Activated CD4-positive, alpha-beta T cell treated with anti-CD3 and anti-CD28 coated beads for 36 hours (primary cell): ENCODE measurements at regions of chr10 and their contacts with region 1.

Region 1: DNA sequence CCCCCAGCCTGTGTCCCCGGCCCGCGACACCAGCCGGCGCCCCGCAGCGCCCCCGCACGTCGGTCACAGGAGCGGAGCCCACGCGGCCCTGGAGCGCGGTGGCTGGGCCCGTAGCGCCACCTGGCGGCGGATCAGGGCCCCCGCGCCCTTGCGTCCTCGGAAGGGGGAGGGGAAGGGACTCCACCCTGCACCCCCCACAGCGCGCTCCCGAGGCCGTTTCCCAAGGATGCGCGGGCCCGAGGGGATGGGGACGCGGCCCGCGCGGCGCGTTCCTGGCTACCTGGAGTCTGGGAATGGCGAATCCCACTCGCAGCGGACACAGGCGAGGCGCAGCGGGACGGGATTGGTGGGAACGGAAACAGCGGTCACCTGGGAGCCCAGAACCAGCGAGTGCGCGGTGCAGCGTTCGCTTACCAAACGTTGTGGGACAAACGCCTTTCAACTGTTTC is 23.8 kb upstream of the MKI67 start:
- DNase-seq: peak; percentile 89
- ATAC-seq: peak; percentile 96
- H3K4me3 Mint-ChIP-seq: peak overlapping the region; percentile 60
- H3K27ac Mint-ChIP-seq: no peak overlapping the region
- H3K4me1 Mint-ChIP-seq: peaks cover 21% of the 10 kb centered on the region
- H3K27me3 Mint-ChIP-seq: no peaks in the 10 kb centered on the region

Region 2: GRCh38 chr10:127906548-127907377 is 243.3 kb before region 1 on chr10 and contains the start of gene PTPRE:
- CTCF ChIA-PET with region 1: no interaction called
- POLR2A ChIA-PET with region 1: no interaction called
- intact Hi-C with region 1: loop called (anchors 1 to 5 kb)
- DNase-seq: peak; percentile 86
- ATAC-seq: peak; percentile 98
- H3K4me3 Mint-ChIP-seq: peak within 1 kb of the TSS; percentile 35
- H3K27ac Mint-ChIP-seq: peak within 1 kb of the TSS; percentile 59
- H3K4me1 Mint-ChIP-seq: no peaks in the 10 kb centered on the region
- H3K27me3 Mint-ChIP-seq: peaks cover 21% of the 10 kb centered on the region
- total RNA-seq, gene PTPRE: 23.0 to 31.6 TPM

Region 3: DNA sequence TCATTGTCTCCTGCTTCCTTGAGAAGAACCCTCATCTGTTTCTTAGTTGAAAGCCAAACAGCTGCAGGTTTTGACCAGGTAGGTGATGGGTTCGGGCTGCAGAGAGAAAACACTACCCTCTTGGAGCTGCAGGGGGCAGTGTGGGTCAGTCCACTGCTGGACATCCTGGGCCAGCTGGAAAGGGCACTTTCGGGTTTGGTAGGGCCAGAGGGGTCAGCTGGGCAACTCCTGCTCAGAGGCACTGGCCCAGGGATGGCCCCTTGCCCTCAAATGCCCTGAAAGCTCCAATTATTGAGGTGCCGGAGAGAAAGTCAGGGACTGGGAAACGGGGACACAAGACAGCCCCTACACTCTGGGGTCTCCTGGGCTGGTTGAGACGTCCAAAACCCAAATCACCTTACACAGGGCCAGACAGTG is 114.5 kb before region 1 on chr10:
- CTCF ChIA-PET with region 1: interaction called, 4 read pairs
- POLR2A ChIA-PET with region 1: no interaction called
- intact Hi-C with region 1: loop called (anchors 1 to 2 kb)
- DNase-seq: peak; percentile 81
- ATAC-seq: peak; percentile 88
- H3K4me3 Mint-ChIP-seq: no peak overlapping the region
- H3K27ac Mint-ChIP-seq: no peak overlapping the region
- H3K4me1 Mint-ChIP-seq: peaks cover 6% of the 10 kb centered on the region
- H3K27me3 Mint-ChIP-seq: no peaks in the 10 kb centered on the region

Region 4: DNA sequence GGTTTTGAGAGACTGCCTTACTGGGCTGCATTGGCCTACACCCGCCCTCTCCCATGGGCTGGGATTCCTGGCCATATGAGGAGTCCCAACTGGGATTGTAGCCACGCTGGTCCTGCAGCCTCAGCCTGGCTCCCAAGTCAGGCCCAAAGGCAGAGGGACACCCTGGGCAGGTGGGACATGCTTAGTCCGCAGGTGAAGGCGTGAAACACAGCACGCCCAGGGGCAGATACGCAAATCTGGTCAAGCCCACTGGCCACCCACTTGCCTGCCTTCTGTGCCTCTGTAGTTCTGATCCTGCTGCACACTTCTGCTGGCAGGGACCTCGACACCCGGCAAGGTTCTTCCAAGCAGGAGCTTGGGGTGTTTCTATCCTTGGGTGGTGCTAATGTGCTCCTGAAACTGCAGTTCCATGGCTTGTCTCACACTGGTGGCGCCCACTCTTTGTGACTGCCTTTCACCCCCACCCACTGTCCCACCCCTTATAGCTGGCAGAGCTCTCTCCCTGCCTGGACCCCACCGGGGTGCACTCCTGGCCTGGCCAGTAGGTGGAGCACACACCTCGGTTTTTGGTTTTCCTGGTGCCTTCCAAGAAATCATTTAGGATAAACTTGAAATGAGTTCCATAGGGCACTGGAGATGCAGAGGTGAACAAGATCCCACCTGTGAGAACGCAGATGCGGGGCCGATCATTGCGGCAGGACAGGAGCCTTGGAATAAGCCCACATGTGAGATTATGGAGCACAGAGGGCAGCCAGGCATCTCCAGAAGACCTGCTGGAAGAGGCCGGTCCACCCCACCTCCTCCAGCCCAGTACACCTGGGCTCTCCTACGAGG is 71.7 kb before region 1 on chr10:
- CTCF ChIA-PET with region 1: interaction called, 6 read pairs
- POLR2A ChIA-PET with region 1: no interaction called
- intact Hi-C with region 1: loop called (anchors 1 kb)
- DNase-seq: peak; percentile 65
- ATAC-seq: peak; percentile 86
- H3K4me3 Mint-ChIP-seq: no peak overlapping the region
- H3K27ac Mint-ChIP-seq: no peak overlapping the region
- H3K4me1 Mint-ChIP-seq: no peaks in the 10 kb centered on the region
- H3K27me3 Mint-ChIP-seq: no peaks in the 10 kb centered on the region

Region 5: GRCh38 chr10:128125944-128126764 is 23.9 kb before region 1 on chr10 and contains the start of gene MKI67:
- CTCF ChIA-PET with region 1: interaction called, 10 read pairs
- POLR2A ChIA-PET with region 1: interaction called, 4 read pairs
- intact Hi-C with region 1: loop called (anchors 1 kb)
- DNase-seq: peak; percentile 96
- ATAC-seq: peak; percentile 93
- H3K4me3 Mint-ChIP-seq: peak within 1 kb of the TSS; percentile 93
- H3K27ac Mint-ChIP-seq: peak within 1 kb of the TSS; percentile 90
- H3K4me1 Mint-ChIP-seq: peaks cover 27% of the 10 kb centered on the region
- H3K27me3 Mint-ChIP-seq: peaks cover 13% of the 10 kb centered on the region
- total RNA-seq, gene MKI67: 234 to 244 TPM